ENCODE measurements at regions of chr17 and their contacts with region 1.

Region 1: GRCh38 chr17:64320613-64321553 is 57.8 kb upstream of the TEX2 start:
- DNase-seq: peak; percentile 77
- CTCF ChIP-seq: peak; percentile 76

Region 2: GRCh38 chr17:64107500-64108235 is 213.2 kb before region 1 on chr17:
- in situ Hi-C with region 1: no loop called
- DNase-seq: no peak
- CTCF ChIP-seq: no peak

Region 3: GRCh38 chr17:64190488-64190887 is 130.4 kb before region 1 on chr17:
- in situ Hi-C with region 1: no loop called
- DNase-seq: no peak
- CTCF ChIP-seq: no peak

Region 4: DNA sequence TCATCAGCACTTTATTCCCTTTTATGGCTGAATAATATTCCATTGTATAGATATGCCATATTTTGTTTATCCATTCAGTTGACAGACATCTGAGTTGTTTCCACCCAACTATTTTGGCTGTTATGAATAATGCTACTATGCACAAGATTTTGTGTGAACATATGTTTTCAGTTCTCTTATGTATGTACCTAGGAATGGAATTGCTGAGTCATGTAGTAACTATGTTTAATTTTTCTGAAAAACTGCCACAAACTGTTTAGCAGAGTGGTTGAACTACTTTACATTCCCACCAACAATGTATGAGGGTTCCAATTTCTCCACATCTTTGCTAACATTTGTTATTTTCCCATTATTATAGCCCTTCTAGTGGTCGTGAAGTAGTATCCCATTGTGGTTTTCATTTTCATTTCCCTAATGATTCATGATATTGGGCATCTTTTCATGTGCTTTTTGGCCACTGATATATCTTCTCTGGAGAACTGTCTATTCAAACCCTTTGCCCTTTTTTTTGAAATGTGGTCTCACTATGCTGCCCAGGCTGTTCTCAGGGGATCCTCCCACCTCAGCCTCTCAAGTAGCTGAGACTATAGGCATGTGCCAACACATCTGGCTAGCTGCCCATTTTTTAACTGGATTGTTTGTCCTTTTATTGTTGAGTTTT is 314.9 kb after region 1 on chr17:
- in situ Hi-C with region 1: loop called (anchors 25 kb)
- DNase-seq: peak; percentile 28
- CTCF ChIP-seq: no peak

Measured in GM13977 (cell line).